Dorsolateral prefrontal cortex (tissue), 120 donors: ENCODE measurements at regions of chr11 and their contacts with region 1.

Region 1: GRCh38 chr11:63938479-63939396 is at the start of gene NAA40:
- DNase-seq: peak; percentile 74 to 92 (median 88)
- H3K4me3 ChIP-seq: peak within 1 kb of the TSS; percentile 44 to 87 (median 73)
- H3K27ac ChIP-seq: peak within 1 kb of the TSS in 54 of 59 donors; percentile 2 to 90 (median 74)
- H3K27me3 ChIP-seq: no peaks in the 10 kb centered on the region
- CTCF ChIP-seq: peak in 46 of 56 donors; percentile 4 to 67 (median 38)
- total RNA-seq, gene NAA40: 18.7 to 46.0 (median 26.4) TPM

Region 2: DNA sequence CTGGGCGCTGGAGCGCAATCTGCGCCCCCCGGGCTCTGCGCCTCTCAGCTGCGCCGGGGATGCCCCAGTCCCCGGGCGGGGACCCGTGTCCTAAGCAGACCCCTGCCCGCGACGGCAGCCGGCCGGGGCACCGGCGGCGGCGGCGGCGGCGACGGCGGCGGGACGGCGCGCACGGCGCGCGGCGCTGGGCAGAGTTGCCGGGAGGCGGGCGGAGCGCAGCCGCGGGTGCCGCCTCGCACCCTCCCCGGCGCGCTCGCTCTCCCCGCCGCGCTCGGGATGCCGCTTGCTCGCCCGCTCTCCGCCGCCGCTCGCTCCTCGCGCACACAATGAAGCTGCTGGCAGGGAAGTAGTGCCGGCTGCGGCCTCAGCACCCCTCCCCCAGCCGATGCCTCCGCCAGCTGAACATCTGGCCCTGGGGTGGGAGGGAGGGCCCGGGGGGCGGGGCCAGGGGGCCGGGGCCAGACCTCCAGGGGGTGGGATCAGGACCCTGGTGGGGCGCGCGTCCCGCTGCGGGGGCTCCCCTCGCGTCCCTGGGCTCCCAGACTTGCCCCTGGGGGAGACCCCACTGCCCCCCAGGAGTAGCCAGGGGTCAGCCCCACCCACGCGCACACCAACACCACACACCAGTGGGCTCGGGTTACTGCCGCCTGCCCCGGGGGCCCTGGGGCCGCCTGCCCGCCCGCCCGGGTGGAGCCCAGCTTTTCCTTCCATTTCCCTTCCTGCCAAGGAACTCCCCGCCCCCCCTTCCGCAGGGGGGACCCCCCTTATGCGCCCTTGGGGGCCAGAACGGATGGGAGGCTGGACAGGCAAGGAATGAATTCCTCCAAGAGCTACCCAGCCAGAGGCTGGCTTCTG is 21.7 kb before region 1 on chr11 and contains the start of gene RCOR2:
- intact Hi-C with region 1: loop called (anchors 2 kb)
- DNase-seq: peak; percentile 68 to 92 (median 84)
- H3K4me3 ChIP-seq: peak within 1 kb of the TSS; percentile 46 to 80 (median 63)
- H3K27ac ChIP-seq: peak within 1 kb of the TSS; percentile 63 to 99 (median 95)
- H3K27me3 ChIP-seq: no peaks in the 10 kb centered on the region
- CTCF ChIP-seq: peak in 4 of 56 donors; percentile 7 to 21 (median 12)
- total RNA-seq, gene RCOR2: 4.7 to 20.2 (median 10.9) TPM